ENCODE measurements at regions of chr12 and their contacts with region 1.

Region 1: GRCh38 chr12:27821259-27821973 is 41.4 kb upstream of the MANSC4 start:
- DNase-seq: peak; percentile 56
- H3K4me3 ChIP-seq: no peak overlapping the region
- H3K27ac ChIP-seq: peak overlapping the region; percentile 22
- H3K27me3 ChIP-seq: no peaks in the 10 kb centered on the region
- CTCF ChIP-seq: peak; percentile 81

Region 2: GRCh38 chr12:27319409-27319808 is 502.0 kb before region 1 on chr12:
- CTCF ChIA-PET with region 1: no interaction called
- POLR2A ChIA-PET with region 1: no interaction called
- DNase-seq: no peak
- H3K4me3 ChIP-seq: no peak overlapping the region
- H3K27ac ChIP-seq: no peak overlapping the region
- H3K27me3 ChIP-seq: no peaks in the 10 kb centered on the region
- CTCF ChIP-seq: no peak

Region 3: GRCh38 chr12:27619308-27619707 is 202.1 kb before region 1 on chr12:
- CTCF ChIA-PET with region 1: no interaction called
- POLR2A ChIA-PET with region 1: no interaction called
- DNase-seq: peak; percentile 8
- H3K4me3 ChIP-seq: no peak overlapping the region
- H3K27ac ChIP-seq: no peak overlapping the region
- H3K27me3 ChIP-seq: no peaks in the 10 kb centered on the region
- CTCF ChIP-seq: no peak

Region 4: GRCh38 chr12:27743601-27744000 is 77.8 kb before region 1 on chr12:
- CTCF ChIA-PET with region 1: interaction called, 11 read pairs
- POLR2A ChIA-PET with region 1: no interaction called
- DNase-seq: no peak
- H3K4me3 ChIP-seq: no peak overlapping the region
- H3K27ac ChIP-seq: no peak overlapping the region
- H3K27me3 ChIP-seq: no peaks in the 10 kb centered on the region
- CTCF ChIP-seq: no peak

Region 5: GRCh38 chr12:27769212-27769611 is 52.2 kb before region 1 on chr12:
- CTCF ChIA-PET with region 1: no interaction called
- POLR2A ChIA-PET with region 1: no interaction called
- DNase-seq: no peak
- H3K4me3 ChIP-seq: no peak overlapping the region
- H3K27ac ChIP-seq: no peak overlapping the region
- H3K27me3 ChIP-seq: no peaks in the 10 kb centered on the region
- CTCF ChIP-seq: no peak

Region 6: GRCh38 chr12:27810756-27811155 is 10.7 kb before region 1 on chr12:
- CTCF ChIA-PET with region 1: interaction called, 19 read pairs
- POLR2A ChIA-PET with region 1: no interaction called
- DNase-seq: no peak
- H3K4me3 ChIP-seq: peak overlapping the region; percentile 7; the same call in 1 of the 2 replicates
- H3K27ac ChIP-seq: no peak overlapping the region
- H3K27me3 ChIP-seq: no peaks in the 10 kb centered on the region
- CTCF ChIP-seq: no peak

Region 7: DNA sequence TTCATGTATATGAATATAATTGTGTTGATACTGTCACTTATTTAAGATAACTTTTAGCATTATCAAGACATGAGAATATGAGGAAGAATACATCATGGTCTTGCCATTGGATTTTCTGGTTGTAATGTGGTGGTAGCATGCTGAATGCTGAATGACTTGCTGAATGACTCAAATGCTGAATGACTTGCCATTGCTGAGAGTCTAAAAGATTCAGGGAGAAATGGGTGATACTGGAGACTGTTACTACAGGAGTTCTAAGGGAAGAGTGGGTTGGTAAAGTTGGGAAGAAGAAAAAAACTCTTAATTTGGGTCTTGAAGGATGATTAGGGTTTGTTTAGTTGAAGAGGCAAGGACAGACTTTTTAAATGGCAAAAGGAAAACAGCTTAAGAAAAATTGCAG is 30.7 kb after region 1 on chr12:
- CTCF ChIA-PET with region 1: interaction called, 11 read pairs
- POLR2A ChIA-PET with region 1: no interaction called
- DNase-seq: no peak
- H3K4me3 ChIP-seq: no peak overlapping the region
- H3K27ac ChIP-seq: no peak overlapping the region
- H3K27me3 ChIP-seq: no peaks in the 10 kb centered on the region
- CTCF ChIP-seq: no peak

Region 8: GRCh38 chr12:27915021-27915420 is 93.6 kb after region 1 on chr12:
- CTCF ChIA-PET with region 1: no interaction called
- POLR2A ChIA-PET with region 1: no interaction called
- DNase-seq: no peak
- H3K4me3 ChIP-seq: no peak overlapping the region
- H3K27ac ChIP-seq: no peak overlapping the region
- H3K27me3 ChIP-seq: no peaks in the 10 kb centered on the region
- CTCF ChIP-seq: no peak

Measured in AG04450 (cell line).